ENCODE measurements at regions of chr2 and their contacts with region 1.

Region 1: GRCh38 chr2:61538200-61538919 is at the start of gene XPO1:
- DNase-seq: peak; percentile 99
- H3K4me3 Mint-ChIP-seq: peak within 1 kb of the TSS; percentile 99
- H3K27ac Mint-ChIP-seq: peak within 1 kb of the TSS; percentile 100
- H3K4me1 Mint-ChIP-seq: peaks cover 23% of the 10 kb centered on the region
- H3K27me3 Mint-ChIP-seq: no peaks in the 10 kb centered on the region
- total RNA-seq, gene XPO1: 218 and 221 TPM in 2 replicates

Region 2: DNA sequence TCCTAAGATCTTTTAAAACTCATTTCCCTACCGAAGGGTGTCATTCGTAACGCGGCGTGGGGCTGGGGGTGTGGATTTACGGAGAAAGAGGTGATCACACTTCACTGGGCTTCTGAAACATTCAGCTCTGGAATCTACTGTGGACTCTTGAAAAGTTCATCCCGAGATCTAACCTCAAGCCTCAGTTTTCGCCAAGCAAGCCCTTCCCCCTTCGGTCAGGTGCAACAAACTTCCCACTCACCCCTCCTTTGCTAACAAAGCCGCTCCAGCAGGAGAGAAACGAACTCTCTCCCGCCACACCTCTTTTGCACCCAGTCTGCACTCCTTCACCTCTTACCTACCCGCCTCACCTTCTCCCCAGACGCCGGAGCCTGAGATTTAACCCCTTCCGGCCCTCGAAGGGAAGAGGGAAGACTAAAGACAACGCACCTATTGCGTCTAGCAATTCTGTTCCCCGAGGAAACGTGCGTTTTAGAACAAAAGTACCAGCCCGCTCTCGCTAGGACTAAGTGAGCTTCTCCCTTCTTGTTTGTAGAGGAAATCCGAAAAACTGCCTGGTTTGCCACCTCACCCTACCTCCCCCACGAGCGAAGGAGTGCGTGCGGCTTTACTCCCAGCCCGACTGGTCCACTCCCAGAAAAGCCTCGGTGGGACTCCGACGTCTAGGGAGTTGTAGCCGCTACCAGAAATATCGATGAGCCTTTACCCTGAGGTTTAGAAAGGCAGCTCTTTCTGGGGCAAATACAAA is 521.4 kb before region 1 on chr2:
- intact Hi-C with region 1: loop called (anchors 2 kb)
- DNase-seq: peak; percentile 69
- H3K4me3 Mint-ChIP-seq: peak overlapping the region; percentile 98
- H3K27ac Mint-ChIP-seq: peak overlapping the region; percentile 98
- H3K4me1 Mint-ChIP-seq: peaks cover 39% of the 10 kb centered on the region
- H3K27me3 Mint-ChIP-seq: no peaks in the 10 kb centered on the region

Region 3: DNA sequence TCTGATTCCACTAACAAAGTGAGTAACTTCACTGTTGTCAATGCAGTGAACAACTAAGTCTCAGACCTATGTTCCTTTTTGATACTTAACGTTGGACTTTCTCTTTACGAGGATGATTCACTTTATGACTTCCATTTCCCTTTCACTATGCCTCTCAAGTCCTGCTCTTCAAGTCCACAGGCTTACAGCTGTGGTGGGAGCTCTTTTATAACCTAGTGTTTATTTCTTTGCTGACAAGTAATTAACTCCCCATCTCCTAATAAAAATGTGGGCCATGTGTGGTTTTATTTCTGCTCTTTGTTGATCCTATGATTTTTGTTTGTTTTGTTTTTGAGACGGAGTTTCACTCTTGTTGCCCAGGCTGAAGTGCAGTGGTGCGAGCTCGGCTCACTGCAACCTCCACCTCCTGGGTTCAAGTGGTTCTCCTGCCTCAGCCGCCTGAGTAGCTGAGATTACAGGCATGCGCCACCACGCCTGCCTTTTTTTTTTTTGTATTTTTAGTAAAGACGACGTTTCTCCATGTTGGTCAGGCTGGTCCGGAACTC is 209.6 kb before region 1 on chr2:
- intact Hi-C with region 1: loop called (anchors 5 kb)
- DNase-seq: no peak
- H3K4me3 Mint-ChIP-seq: peak overlapping the region; percentile 64
- H3K27ac Mint-ChIP-seq: peak overlapping the region; percentile 95
- H3K4me1 Mint-ChIP-seq: peaks cover 28% of the 10 kb centered on the region
- H3K27me3 Mint-ChIP-seq: no peaks in the 10 kb centered on the region

Region 4: GRCh38 chr2:61493523-61493942 is 44.8 kb before region 1 on chr2:
- intact Hi-C with region 1: no loop called
- DNase-seq: no peak
- H3K4me3 Mint-ChIP-seq: no peak overlapping the region
- H3K27ac Mint-ChIP-seq: peak overlapping the region; percentile 25
- H3K4me1 Mint-ChIP-seq: peaks cover 17% of the 10 kb centered on the region
- H3K27me3 Mint-ChIP-seq: no peaks in the 10 kb centered on the region

Region 5: GRCh38 chr2:61670591-61671501 is 132.5 kb after region 1 on chr2:
- intact Hi-C with region 1: loop called (anchors 2 kb)
- DNase-seq: peak; percentile 12
- H3K4me3 Mint-ChIP-seq: peak overlapping the region; percentile 61
- H3K27ac Mint-ChIP-seq: peak overlapping the region; percentile 89
- H3K4me1 Mint-ChIP-seq: peaks cover 19% of the 10 kb centered on the region
- H3K27me3 Mint-ChIP-seq: no peaks in the 10 kb centered on the region

Region 6: GRCh38 chr2:61854474-61855182 is 316.3 kb after region 1 on chr2:
- intact Hi-C with region 1: loop called (anchors 1 kb)
- DNase-seq: peak; percentile 87
- H3K4me3 Mint-ChIP-seq: peak overlapping the region; percentile 89
- H3K27ac Mint-ChIP-seq: peak overlapping the region; percentile 88
- H3K4me1 Mint-ChIP-seq: peaks cover 16% of the 10 kb centered on the region
- H3K27me3 Mint-ChIP-seq: no peaks in the 10 kb centered on the region

Region 7: DNA sequence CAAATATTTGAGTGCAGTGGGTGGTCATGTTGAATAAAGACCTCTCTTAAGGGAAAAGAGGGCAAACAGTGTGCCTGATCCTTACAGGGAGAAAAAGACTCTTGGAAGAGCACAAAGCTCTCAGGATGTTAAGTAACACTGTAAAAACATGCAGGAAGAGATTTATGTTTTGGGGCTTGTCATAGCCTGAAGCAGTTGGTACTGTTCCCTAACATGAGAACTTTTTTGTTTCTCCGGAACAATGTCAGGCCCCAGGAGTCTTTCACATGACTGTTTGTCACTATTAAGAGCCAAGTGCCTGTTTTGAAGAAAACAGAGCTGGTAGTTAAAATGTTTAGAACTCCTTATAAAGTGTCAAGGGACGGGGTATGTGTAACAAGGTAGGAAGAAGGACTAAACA is 573.8 kb after region 1 on chr2:
- intact Hi-C with region 1: no loop called
- DNase-seq: no peak
- H3K4me3 Mint-ChIP-seq: no peak overlapping the region
- H3K27ac Mint-ChIP-seq: no peak overlapping the region
- H3K4me1 Mint-ChIP-seq: no peaks in the 10 kb centered on the region
- H3K27me3 Mint-ChIP-seq: no peaks in the 10 kb centered on the region

Measured in activated T-helper 2 cell treated with anti-CD3 and anti-CD28 coated beads, Interferon-gamma antibody, Interleukin-2, Interleukin-4, amounts not matched to agents 10 μg/mL and 5 μg/mL and 100 μg/mL, durations not matched to agents 14 hours and 24 hours and 36 hours (primary cell).